ENCODE measurements at regions of chr9 and their contacts with region 1.

Region 1: GRCh38 chr9:7055201-7055903 is 297.6 kb downstream of the KDM4C start:
- DNase-seq: no peak
- H3K4me3 ChIP-seq: no peak overlapping the region
- H3K27ac ChIP-seq: no peak overlapping the region
- H3K4me1 ChIP-seq: peaks cover 7% of the 10 kb centered on the region in 2 experiments; a peak in 2 of 4 replicates
- H3K27me3 ChIP-seq: no peaks in the 10 kb centered on the region
- CTCF ChIP-seq: no peak
- EP300 ChIP-seq: no peak
- RAD21 ChIP-seq: no peak

Region 2: GRCh38 chr9:6827439-6827838 is 227.9 kb before region 1 on chr9:
- CTCF ChIA-PET with region 1: interaction called, 12 read pairs
- POLR2A ChIA-PET with region 1: no interaction called
- DNase-seq: peak; percentile 67
- H3K4me3 ChIP-seq: no peak overlapping the region; a peak in 1 of 4 replicates
- H3K27ac ChIP-seq: no peak overlapping the region
- H3K4me1 ChIP-seq: peaks cover 0 to 9% of the 10 kb centered on the region in 2 experiments; a peak in 2 of 4 replicates
- H3K27me3 ChIP-seq: no peaks in the 10 kb centered on the region
- CTCF ChIP-seq: peak; percentile 79
- EP300 ChIP-seq: no peak
- RAD21 ChIP-seq: peak; percentile 90

Region 3: DNA sequence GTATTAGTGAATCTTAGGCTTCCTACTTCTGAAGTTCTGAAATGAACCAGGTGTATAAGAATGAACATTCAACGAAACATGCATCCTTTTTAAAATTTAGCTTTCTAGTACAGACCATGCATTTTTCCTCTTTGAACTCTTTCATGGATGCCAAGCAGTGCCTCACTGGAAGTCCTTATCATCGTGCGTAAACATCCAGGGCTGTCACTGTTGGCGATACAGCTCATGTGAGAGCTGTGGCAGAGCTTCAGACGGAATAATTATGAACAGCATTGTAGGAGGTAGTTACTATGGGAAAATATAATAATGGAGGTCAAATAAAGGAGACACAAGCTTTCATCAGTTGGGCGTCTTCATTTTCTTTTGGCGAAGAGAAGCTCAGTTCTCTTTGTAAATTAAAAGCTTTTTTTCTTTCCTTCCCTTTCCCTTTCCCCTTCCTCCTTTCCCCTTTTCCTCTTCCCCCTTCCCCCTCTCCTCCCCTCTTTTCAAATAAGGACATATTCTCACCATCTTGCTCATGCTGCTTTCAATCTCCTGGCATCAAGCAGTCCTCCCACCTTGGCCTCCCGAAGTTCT is 130.3 kb before region 1 on chr9:
- CTCF ChIA-PET with region 1: interaction called, 11 read pairs
- POLR2A ChIA-PET with region 1: no interaction called
- DNase-seq: peak; percentile 34
- H3K4me3 ChIP-seq: no peak overlapping the region
- H3K27ac ChIP-seq: peak overlapping the region in 1 of 2 experiments; percentile 90; a peak in 2 of 4 replicates
- H3K4me1 ChIP-seq: peaks cover 0 to 30% of the 10 kb centered on the region in 2 experiments; a peak in 2 of 4 replicates
- H3K27me3 ChIP-seq: no peaks in the 10 kb centered on the region
- CTCF ChIP-seq: no peak
- EP300 ChIP-seq: peak in 1 of 2 experiments; percentile 57; a peak in 1 of 4 replicates
- RAD21 ChIP-seq: peak; percentile 19; the same call in 1 of the 2 replicates

Region 4: DNA sequence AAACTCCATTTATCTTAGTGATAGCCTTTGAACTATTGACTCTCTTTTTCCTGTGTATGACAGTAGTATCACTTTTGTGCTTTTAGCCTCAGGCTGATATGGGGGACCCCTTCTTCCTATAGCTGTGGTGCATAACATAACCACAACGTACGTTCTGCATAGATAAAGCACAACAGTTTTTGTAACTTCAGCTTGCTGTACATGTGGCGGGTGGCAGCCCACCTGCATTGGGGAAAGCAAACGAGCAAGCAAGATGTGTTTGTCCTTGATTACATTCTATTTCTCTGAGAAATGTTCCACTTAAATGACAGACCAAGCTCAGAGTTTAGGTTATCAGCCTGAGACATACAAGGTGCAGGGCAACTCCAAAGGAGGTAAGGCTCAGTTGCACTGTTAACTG is 11.8 kb after region 1 on chr9:
- CTCF ChIA-PET with region 1: interaction called, 24 read pairs
- POLR2A ChIA-PET with region 1: no interaction called
- DNase-seq: no peak
- H3K4me3 ChIP-seq: no peak overlapping the region
- H3K27ac ChIP-seq: no peak overlapping the region
- H3K4me1 ChIP-seq: no peaks in the 10 kb centered on the region
- H3K27me3 ChIP-seq: no peaks in the 10 kb centered on the region
- CTCF ChIP-seq: no peak
- EP300 ChIP-seq: no peak
- RAD21 ChIP-seq: no peak

Region 5: DNA sequence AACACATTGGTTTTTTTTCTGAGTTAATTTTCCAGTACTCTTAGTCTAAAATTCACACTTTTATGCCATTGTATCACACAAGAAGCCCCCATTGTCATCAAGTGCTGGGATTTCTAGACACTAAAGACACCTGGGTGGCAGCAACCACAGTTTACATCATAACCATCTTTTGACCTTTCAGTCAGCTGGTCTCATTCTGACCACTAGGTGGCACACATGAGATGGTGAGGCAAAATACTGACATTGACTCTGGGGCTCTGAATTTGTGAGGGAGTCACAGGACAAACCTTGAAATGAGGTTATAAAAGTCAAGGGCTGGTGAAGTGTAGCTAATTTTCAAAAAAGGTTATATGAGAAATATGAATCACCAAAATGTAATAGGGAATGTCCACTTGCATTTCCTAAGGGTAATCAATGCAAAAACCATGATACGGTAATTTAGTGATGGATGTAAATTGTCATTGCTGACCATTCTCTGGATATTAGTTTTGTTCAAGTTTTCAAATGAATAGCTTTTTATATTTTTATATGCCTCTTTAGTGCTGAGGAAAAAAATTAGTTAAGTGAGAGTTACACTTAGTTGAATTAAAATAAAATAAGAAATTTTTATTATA is 514.9 kb after region 1 on chr9:
- CTCF ChIA-PET with region 1: interaction called, 13 read pairs
- POLR2A ChIA-PET with region 1: no interaction called
- DNase-seq: peak; percentile 29
- H3K4me3 ChIP-seq: peak overlapping the region in 1 of 2 experiments; percentile 21; a peak in 1 of 4 replicates
- H3K27ac ChIP-seq: no peak overlapping the region
- H3K4me1 ChIP-seq: no peaks in the 10 kb centered on the region
- H3K27me3 ChIP-seq: no peaks in the 10 kb centered on the region; the same call in 1 of the 2 replicates
- CTCF ChIP-seq: peak; percentile 88
- EP300 ChIP-seq: no peak
- RAD21 ChIP-seq: peak; percentile 85